Panc1 (cell line): ENCODE measurements at regions of chr1 and their contacts with region 1.

Region 1: GRCh38 chr1:23140940-23141596 is 27.6 kb downstream of the LUZP1 start:
- DNase-seq: no peak
- ATAC-seq: no peak; the same call in 1 of the 2 replicates
- H3K4me3 ChIP-seq: no peak overlapping the region
- H3K27ac ChIP-seq: no peak overlapping the region
- H3K4me1 ChIP-seq: no peaks in the 10 kb centered on the region
- H3K27me3 ChIP-seq: no peaks in the 10 kb centered on the region
- CTCF ChIP-seq: no peak

Region 2: GRCh38 chr1:22963044-22963677 is 177.9 kb before region 1 on chr1:
- CTCF ChIA-PET with region 1: no interaction called
- POLR2A ChIA-PET with region 1: no interaction called
- in situ Hi-C with region 1: no loop called
- intact Hi-C with region 1: no loop called
- DNase-seq: no peak
- ATAC-seq: no peak
- H3K4me3 ChIP-seq: no peak overlapping the region
- H3K27ac ChIP-seq: no peak overlapping the region
- H3K4me1 ChIP-seq: no peaks in the 10 kb centered on the region
- H3K27me3 ChIP-seq: peaks cover 5% of the 10 kb centered on the region
- CTCF ChIP-seq: no peak

Region 3: DNA sequence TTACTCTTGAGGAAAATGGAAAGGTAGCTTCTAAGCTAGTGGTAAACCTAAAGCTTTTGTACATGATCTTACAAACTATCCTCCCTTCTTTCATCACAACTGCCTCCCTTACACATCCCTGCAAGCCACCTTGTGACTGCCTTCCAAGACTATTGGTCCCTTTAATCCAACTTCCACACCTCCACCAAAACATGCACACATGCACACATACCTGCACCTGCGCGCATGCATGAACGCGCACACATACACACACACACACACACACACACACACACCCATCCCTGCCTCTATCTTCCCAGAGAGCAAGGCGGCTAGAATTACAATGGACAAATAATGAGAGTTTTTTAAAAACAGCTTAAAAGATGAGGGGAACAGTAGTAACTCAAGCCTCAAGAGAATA is 30.7 kb before region 1 on chr1:
- CTCF ChIA-PET with region 1: no interaction called
- POLR2A ChIA-PET with region 1: interaction called, 14 read pairs
- in situ Hi-C with region 1: no loop called
- intact Hi-C with region 1: no loop called
- DNase-seq: no peak
- ATAC-seq: no peak
- H3K4me3 ChIP-seq: no peak overlapping the region
- H3K27ac ChIP-seq: no peak overlapping the region
- H3K4me1 ChIP-seq: peaks cover 7% of the 10 kb centered on the region
- H3K27me3 ChIP-seq: no peaks in the 10 kb centered on the region
- CTCF ChIP-seq: no peak